Endothelial cell of umbilical vein (primary cell): ENCODE measurements at regions of chr6 and their contacts with region 1.

Region 1: GRCh38 chr6:143652841-143653331 is 24.9 kb upstream of the PHACTR2 start:
- DNase-seq: no peak
- H3K4me3 ChIP-seq: no peak overlapping the region
- H3K27ac ChIP-seq: no peak overlapping the region
- H3K4me1 ChIP-seq: peaks cover 7% of the 10 kb centered on the region
- H3K27me3 ChIP-seq: no peaks in the 10 kb centered on the region
- CTCF ChIP-seq: no peak
- POLR2A ChIP-seq: no peak

Region 2: GRCh38 chr6:143615785-143616184 is 37.1 kb before region 1 on chr6:
- CTCF ChIA-PET with region 1: no interaction called
- POLR2A ChIA-PET with region 1: no interaction called
- dilution Hi-C with region 1: no loop called
- intact Hi-C with region 1: loop called (anchors 5 kb)
- DNase-seq: no peak
- H3K4me3 ChIP-seq: no peak overlapping the region
- H3K27ac ChIP-seq: no peak overlapping the region
- H3K4me1 ChIP-seq: no peaks in the 10 kb centered on the region
- H3K27me3 ChIP-seq: no peaks in the 10 kb centered on the region
- CTCF ChIP-seq: no peak
- POLR2A ChIP-seq: no peak